Naive thymus-derived CD4-positive, alpha-beta T cell (primary cell): ENCODE measurements at regions of chr10 and their contacts with region 1.

Region 1: GRCh38 chr10:110093722-110094121 is 85.9 kb downstream of the ADD3 start:
- DNase-seq: no peak
- ATAC-seq: no peak
- H3K4me3 ChIP-seq: no peak overlapping the region
- H3K4me3 Mint-ChIP-seq: peak overlapping the region in 1 of 10 donors; percentile 24
- H3K27ac ChIP-seq: no peak overlapping the region
- H3K27ac Mint-ChIP-seq: peak overlapping the region in 2 of 9 donors; percentile 25 to 61
- H3K4me1 ChIP-seq: peaks cover 8 to 16% of the 10 kb centered on the region in 2 donors
- H3K4me1 Mint-ChIP-seq: peaks cover 43 to 98% (median 84%) of the 10 kb centered on the region in 7 donors
- H3K27me3 ChIP-seq: no peaks in the 10 kb centered on the region
- H3K27me3 Mint-ChIP-seq: no peaks in the 10 kb centered on the region

Region 2: GRCh38 chr10:110081911-110082310 is 11.8 kb before region 1 on chr10:
- CTCF ChIA-PET with region 1: interaction called, 5 read pairs
- POLR2A ChIA-PET with region 1: interaction called, 9 read pairs
- intact Hi-C with region 1: loop called in 1 of 2 experiments (anchors 1 kb)
- DNase-seq: peak in 1 of 9 donors; percentile 32
- ATAC-seq: peak; percentile 53
- H3K4me3 ChIP-seq: no peak overlapping the region
- H3K4me3 Mint-ChIP-seq: peak overlapping the region; percentile 38 to 92 (median 64)
- H3K27ac ChIP-seq: peak overlapping the region; percentile 47
- H3K27ac Mint-ChIP-seq: peak overlapping the region; percentile 51 to 94 (median 94)
- H3K4me1 ChIP-seq: peaks cover 68 to 82% of the 10 kb centered on the region in 2 donors
- H3K4me1 Mint-ChIP-seq: peaks cover 64 to 99% (median 88%) of the 10 kb centered on the region in 7 donors
- H3K27me3 ChIP-seq: no peaks in the 10 kb centered on the region
- H3K27me3 Mint-ChIP-seq: no peaks in the 10 kb centered on the region

Region 3: DNA sequence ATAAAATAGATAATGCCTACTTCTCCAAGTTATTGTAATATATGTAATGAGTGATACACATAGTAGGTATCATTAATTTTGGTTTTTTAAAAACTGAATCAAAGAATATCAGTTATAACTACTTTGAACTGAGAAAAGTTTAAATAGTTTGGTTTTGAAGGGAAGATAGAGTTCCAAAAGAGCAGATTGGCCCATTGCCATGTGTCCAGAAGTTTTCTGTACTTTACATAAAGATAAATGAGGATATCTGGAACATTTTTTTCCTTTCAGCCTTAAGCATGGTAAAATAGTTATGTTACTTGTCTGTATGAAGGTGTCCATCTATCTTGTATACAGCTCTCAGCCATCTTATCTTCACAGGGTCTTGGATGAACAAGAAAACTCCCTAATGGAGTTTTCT is 15.8 kb after region 1 on chr10:
- CTCF ChIA-PET with region 1: interaction called, 3 read pairs
- POLR2A ChIA-PET with region 1: interaction called, 4 read pairs
- intact Hi-C with region 1: loop called in 1 of 2 experiments (anchors 2 kb)
- DNase-seq: no peak
- ATAC-seq: no peak
- H3K4me3 ChIP-seq: no peak overlapping the region
- H3K4me3 Mint-ChIP-seq: no peak overlapping the region
- H3K27ac ChIP-seq: no peak overlapping the region
- H3K27ac Mint-ChIP-seq: peak overlapping the region in 7 of 9 donors; percentile 21 to 85 (median 69)
- H3K4me1 ChIP-seq: no peaks in the 10 kb centered on the region
- H3K4me1 Mint-ChIP-seq: peaks cover 18 to 56% (median 45%) of the 10 kb centered on the region in 7 donors
- H3K27me3 ChIP-seq: no peaks in the 10 kb centered on the region
- H3K27me3 Mint-ChIP-seq: no peaks in the 10 kb centered on the region